CD4-positive, alpha-beta memory T cell (primary cell): ENCODE measurements at regions of chr7 and their contacts with region 1.

Region 1: DNA sequence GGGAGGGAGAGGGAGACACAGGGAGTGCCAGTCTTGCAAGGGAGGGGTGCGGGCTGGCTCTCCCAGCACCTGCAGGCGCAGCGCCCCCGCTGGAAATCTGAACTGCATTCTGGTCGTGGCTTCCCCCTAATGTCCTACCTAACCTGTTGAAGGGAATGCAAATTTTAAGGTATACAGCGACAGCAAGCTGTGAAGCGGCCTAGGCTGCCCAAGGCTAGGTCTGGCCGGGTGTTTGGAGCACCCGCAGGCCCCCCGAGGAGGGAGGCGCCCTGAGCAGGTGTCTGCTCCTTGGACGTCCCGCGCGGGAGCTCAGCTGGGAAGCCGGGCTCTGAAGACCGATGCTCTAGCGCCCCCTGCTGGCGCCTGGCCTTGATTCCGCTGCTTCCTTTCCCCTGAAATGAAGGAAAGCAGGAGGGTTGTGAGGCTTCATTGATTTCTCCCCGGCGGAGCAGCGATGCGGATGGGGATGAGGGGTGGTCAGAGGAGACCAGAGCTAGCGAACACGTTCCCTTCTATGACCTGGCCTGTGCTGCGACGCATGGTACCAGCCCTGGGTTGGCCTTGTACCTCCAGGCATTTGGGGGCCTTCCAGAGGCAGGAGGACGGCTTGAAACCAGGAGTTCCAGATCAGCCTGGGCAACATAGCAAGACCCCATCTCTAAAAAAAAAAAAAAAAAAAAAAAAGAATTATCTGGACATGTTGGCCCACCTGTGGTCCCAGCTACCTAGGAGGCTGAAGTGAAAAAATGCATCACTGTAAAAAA is 601.3 kb downstream of the GALNT17 start:
- DNase-seq: peak; percentile 37 to 55 (median 46)
- H3K4me3 ChIP-seq: no peak overlapping the region
- H3K4me3 Mint-ChIP-seq: no peak overlapping the region
- H3K27ac ChIP-seq: no peak overlapping the region
- H3K27ac Mint-ChIP-seq: peak overlapping the region in 1 of 7 donors; percentile 60
- H3K4me1 ChIP-seq: no peaks in the 10 kb centered on the region
- H3K4me1 Mint-ChIP-seq: peaks cover 0 to 7% (median 2%) of the 10 kb centered on the region in 4 donors
- H3K27me3 ChIP-seq: no peaks in the 10 kb centered on the region
- H3K27me3 Mint-ChIP-seq: no peaks in the 10 kb centered on the region

Region 2: GRCh38 chr7:71707041-71707440 is 26.2 kb before region 1 on chr7:
- CTCF ChIA-PET with region 1: no interaction called
- POLR2A ChIA-PET with region 1: no interaction called
- intact Hi-C with region 1: no loop called
- DNase-seq: no peak
- H3K4me3 ChIP-seq: no peak overlapping the region
- H3K4me3 Mint-ChIP-seq: no peak overlapping the region
- H3K27ac ChIP-seq: no peak overlapping the region
- H3K27ac Mint-ChIP-seq: no peak overlapping the region
- H3K4me1 ChIP-seq: no peaks in the 10 kb centered on the region
- H3K4me1 Mint-ChIP-seq: no peaks in the 10 kb centered on the region
- H3K27me3 ChIP-seq: no peaks in the 10 kb centered on the region
- H3K27me3 Mint-ChIP-seq: no peaks in the 10 kb centered on the region

Region 3: DNA sequence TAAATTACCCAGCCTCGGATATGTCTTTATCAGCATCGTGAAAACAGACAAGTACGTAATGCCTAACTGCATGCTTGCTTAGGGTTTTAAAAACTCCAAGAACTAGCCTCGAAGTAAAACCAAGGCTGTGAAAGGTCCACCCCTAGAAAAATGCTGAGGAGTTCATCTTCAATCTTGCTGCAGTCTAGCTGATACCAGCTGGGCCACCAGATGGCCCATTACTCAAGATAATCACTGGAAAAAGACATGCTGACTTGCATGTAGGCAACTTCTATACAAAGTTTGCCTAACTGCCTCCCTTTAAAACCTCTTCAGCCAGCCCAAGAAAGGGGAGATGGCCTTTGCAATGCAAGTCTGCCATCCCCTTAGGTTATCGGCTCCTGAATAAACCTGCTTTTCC is 12.7 kb after region 1 on chr7:
- CTCF ChIA-PET with region 1: interaction called, 12 read pairs
- POLR2A ChIA-PET with region 1: no interaction called
- intact Hi-C with region 1: no loop called
- DNase-seq: no peak
- H3K4me3 ChIP-seq: no peak overlapping the region
- H3K4me3 Mint-ChIP-seq: no peak overlapping the region
- H3K27ac ChIP-seq: no peak overlapping the region
- H3K27ac Mint-ChIP-seq: peak overlapping the region in 1 of 7 donors; percentile 14
- H3K4me1 ChIP-seq: no peaks in the 10 kb centered on the region
- H3K4me1 Mint-ChIP-seq: no peaks in the 10 kb centered on the region
- H3K27me3 ChIP-seq: no peaks in the 10 kb centered on the region
- H3K27me3 Mint-ChIP-seq: peaks cover 3 to 4% of the 10 kb centered on the region in 2 donors